ENCODE measurements at regions of chr1 and their contacts with region 1.

Region 1: DNA sequence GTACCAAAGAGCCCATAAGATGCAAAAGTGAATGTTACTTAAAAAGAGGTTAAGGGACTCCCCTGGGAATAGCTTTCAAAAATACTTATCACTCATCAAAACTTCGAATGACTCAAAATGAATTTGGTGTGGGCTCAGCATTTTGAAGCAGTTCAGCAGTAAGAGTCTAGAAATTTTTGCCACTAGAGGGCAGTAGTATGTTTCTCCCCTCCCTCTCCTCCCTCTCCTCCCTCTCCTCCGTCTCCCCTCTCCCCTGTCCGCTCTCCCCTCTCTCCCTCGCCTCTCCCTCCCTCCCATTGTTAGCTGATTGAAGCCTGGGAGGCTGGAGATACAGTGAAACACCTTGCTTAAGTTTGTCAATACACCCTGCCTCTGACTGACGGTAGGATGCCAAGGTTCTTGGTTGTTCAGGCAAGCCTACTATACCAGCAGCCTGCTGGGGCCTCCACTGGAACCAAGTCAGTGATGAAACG is 70.8 kb upstream of the TENT5C start:
- DNase-seq: peak; percentile 64
- ATAC-seq: peak; percentile 91
- H3K4me3 Mint-ChIP-seq: no peak overlapping the region
- H3K27ac Mint-ChIP-seq: no peak overlapping the region
- H3K4me1 Mint-ChIP-seq: no peaks in the 10 kb centered on the region; the same call in 1 of the 2 replicates
- H3K27me3 Mint-ChIP-seq: no peaks in the 10 kb centered on the region
- CTCF ChIP-seq: peak; percentile 61; the same call in 1 of the 2 replicates

Region 2: DNA sequence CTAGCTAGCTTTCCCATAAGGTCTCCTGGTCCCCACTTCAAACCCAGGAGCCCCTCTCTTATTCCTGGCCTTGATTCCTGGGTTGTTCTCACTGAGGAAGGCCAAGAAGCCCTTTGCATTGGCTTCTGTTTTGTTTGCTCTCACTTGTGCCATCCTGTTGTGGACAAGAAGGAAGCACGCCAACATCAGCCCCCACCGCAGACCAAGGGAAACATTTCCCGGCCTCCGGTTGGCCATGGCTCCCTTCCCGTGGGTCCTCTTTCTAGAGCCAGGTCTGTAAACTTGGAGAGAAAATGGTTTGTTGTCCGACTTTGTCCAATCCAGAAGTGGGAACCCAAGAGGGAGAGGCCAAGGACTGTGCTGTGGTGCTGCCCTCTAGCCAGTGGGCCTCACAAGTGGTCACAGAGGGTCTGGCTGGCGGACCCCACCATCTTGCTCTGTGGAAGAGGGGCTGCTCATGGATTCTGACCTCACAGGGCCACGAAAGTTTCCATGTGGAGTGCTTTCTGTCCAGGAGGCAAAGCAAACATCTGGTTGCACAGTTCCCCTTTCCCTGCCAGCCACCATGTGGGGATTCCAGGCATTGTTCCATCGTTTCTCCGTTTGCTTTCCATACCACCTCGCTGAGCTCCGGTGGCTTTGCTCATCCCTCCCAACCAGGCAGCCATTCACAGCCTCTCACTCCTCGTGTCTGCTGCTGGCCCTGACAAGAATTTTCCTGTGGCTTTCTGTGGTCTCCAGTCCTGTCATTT is 51.9 kb after region 1 on chr1:
- CTCF ChIA-PET with region 1: interaction called, 10 read pairs
- POLR2A ChIA-PET with region 1: no interaction called
- DNase-seq: no peak
- ATAC-seq: no peak
- H3K4me3 Mint-ChIP-seq: no peak overlapping the region
- H3K27ac Mint-ChIP-seq: no peak overlapping the region
- H3K4me1 Mint-ChIP-seq: peaks cover 7% of the 10 kb centered on the region; the same call in 1 of the 2 replicates
- H3K27me3 Mint-ChIP-seq: no peaks in the 10 kb centered on the region
- CTCF ChIP-seq: no peak

Region 3: DNA sequence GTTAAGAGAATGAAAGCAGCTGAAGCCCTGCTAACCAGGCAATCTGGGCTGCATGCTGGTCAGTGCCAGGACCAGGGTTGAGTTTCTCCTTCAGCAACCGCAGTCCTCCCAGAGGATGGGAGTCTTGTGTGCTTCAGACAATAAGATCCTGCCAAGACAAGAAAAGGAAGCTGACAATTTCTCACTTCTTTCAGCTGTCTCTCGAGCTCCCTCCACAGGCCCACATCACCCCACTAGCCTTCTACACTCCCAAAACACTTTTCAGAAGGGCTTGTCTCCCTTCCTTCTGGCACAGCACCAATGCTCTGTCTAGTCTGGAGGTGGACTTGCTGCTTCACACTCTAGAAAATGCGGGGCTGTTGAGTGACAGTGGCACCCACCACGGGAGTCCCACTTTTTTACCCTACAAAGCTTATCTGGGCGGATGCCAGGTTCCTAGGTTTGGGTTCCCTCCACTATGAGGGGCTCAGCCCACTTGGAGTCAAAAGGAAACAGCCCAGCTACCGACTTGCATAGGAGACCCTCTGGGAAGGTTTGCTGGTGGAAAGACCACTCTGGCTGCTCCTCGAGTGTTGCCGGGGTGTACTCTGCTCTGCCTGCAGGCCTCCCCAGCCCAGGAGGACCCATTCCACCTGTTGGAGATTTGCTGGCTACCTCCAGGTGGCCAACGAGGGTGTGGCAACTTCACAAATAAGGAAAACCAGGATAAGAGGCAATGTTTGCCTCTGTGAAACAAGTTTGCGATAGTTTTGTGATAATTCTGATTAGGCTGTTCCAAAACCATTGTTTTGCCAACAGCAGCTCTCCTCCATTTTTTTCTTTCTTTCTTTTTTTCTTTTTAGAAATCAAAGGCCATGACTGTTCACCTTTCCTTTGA is 139.7 kb after region 1 on chr1:
- CTCF ChIA-PET with region 1: interaction called, 18 read pairs
- POLR2A ChIA-PET with region 1: no interaction called
- DNase-seq: no peak
- ATAC-seq: peak; percentile 43
- H3K4me3 Mint-ChIP-seq: no peak overlapping the region
- H3K27ac Mint-ChIP-seq: no peak overlapping the region
- H3K4me1 Mint-ChIP-seq: peaks cover 19% of the 10 kb centered on the region
- H3K27me3 Mint-ChIP-seq: no peaks in the 10 kb centered on the region
- CTCF ChIP-seq: no peak

Region 4: DNA sequence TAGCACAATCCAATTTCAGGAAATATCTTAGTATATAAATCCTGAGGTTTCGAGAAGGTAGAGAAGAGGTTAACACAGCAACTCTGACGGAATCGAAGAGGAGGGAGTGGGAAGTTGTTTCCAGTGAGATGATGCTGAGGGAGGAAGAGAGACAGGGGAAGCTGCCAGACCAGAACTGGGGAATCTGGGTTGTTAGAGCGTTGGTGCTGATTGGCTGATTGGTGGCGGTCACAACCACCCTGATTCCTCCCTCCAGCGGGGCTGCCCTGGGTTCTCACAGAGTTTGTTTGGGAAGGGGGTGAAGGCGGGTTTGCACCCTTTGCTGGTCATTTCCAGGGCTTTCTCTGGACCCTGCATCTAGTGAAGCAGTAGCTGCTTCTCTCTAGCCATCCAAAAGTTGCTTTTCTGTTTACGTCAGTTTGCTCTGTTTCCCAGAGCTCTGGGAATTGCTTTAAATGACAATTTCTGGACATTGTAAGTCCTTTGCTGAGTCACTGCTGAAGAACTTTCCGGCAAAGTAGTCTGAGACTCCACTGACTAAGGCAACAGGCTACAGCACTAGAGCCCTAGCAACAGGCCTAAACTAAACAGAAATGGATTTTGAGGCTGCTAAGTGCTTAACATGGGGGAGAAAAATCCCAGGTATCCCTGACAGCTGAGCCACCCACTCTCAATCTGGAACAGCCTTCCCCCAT is 160.9 kb after region 1 on chr1:
- CTCF ChIA-PET with region 1: interaction called, 11 read pairs
- POLR2A ChIA-PET with region 1: no interaction called
- DNase-seq: no peak
- ATAC-seq: peak; percentile 89
- H3K4me3 Mint-ChIP-seq: no peak overlapping the region
- H3K27ac Mint-ChIP-seq: no peak overlapping the region; the same call in 1 of the 2 replicates
- H3K4me1 Mint-ChIP-seq: peaks cover 7% of the 10 kb centered on the region
- H3K27me3 Mint-ChIP-seq: no peaks in the 10 kb centered on the region
- CTCF ChIP-seq: no peak

Region 5: DNA sequence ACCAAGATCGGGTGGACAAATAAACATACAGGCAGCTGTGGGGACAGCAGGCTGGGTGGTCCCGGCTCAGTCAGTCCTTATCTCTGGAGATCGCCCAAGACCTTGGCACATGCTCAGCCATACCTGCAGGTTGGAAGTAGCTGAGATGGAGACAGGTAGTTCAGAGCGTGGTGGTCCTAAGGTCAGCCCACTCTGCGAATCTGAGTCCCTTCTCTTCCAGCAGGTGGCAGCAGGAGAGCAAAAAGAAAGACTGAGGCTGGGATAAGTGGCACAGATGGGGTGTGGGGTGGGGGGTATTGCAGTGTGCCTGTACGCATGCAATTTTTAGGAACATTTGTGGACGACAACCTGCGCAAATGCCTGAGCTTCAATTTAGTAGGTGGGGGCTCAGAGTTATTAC is 175.7 kb after region 1 on chr1:
- CTCF ChIA-PET with region 1: interaction called, 16 read pairs
- POLR2A ChIA-PET with region 1: no interaction called
- DNase-seq: peak; percentile 48
- ATAC-seq: peak; percentile 55
- H3K4me3 Mint-ChIP-seq: no peak overlapping the region
- H3K27ac Mint-ChIP-seq: no peak overlapping the region
- H3K4me1 Mint-ChIP-seq: peaks cover 27% of the 10 kb centered on the region
- H3K27me3 Mint-ChIP-seq: peaks cover 7% of the 10 kb centered on the region
- CTCF ChIP-seq: peak; percentile 33; the same call in 1 of the 2 replicates

Region 6: GRCh38 chr1:117758444-117759316 is 223.6 kb after region 1 on chr1:
- CTCF ChIA-PET with region 1: interaction called, 44 read pairs
- POLR2A ChIA-PET with region 1: no interaction called
- DNase-seq: peak; percentile 90
- ATAC-seq: peak; percentile 93
- H3K4me3 Mint-ChIP-seq: peak overlapping the region; percentile 59
- H3K27ac Mint-ChIP-seq: peak overlapping the region; percentile 33
- H3K4me1 Mint-ChIP-seq: peaks cover 28% of the 10 kb centered on the region
- H3K27me3 Mint-ChIP-seq: peaks cover 2% of the 10 kb centered on the region; the same call in 1 of the 2 replicates
- CTCF ChIP-seq: peak; percentile 76